ENCODE measurements at regions of chr1 and their contacts with region 1.

Region 1: GRCh38 chr1:159989581-159989980 is 35.5 kb upstream of the SLAMF9 start:
- DNase-seq: no peak

Region 2: GRCh38 chr1:159548126-159548525 is 441.5 kb before region 1 on chr1:
- intact Hi-C with region 1: loop called in 1 of 2 experiments (anchors 10 kb)
- DNase-seq: no peak

Region 3: DNA sequence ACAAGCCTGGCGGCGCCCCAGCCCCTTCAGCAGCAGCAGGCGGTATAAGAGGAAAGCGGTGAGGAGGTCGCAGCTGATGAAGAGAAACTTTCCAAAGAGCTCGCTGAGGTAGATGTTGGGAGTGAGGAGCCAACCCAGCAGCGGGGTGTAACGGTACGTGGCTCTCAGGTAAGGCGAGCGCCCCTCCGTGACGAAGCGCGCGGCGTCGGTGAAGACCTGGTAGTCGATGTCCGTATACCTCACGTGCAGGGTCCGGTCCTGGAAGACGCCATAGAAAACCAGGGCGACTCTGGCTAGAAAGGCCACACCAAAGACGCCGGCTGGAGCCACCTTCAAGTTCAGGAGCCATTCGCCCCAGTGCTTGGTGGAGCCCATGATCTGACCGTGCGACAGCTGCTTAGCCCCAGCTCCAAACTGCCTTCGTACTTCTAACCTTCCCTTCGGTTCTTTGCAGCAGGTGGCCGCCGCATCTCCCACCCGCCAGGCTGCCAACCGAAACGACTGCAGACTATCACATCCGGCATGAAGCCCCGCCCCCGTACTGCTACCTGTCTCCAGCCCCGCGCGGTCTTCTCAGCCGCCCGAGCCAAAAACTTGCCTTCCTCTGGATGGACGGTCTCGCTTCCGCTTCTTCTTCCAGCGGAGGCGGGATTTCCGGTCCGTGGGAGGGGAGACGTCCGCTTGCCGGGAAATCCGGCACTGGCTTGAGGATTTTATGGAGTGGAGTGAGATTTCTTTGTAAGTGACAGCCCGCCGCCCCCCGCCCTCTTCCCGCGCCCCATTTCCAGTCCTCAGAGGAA is 42.0 kb after region 1 on chr1 and contains the start of gene PIGM:
- intact Hi-C with region 1: no loop called
- DNase-seq: peak; percentile 97
- total RNA-seq, gene PIGM: 5.5 to 6.3 TPM

Measured in posterior vena cava (tissue), 2 donors.